ENCODE measurements at regions of chr11 and their contacts with region 1.

Region 1: DNA sequence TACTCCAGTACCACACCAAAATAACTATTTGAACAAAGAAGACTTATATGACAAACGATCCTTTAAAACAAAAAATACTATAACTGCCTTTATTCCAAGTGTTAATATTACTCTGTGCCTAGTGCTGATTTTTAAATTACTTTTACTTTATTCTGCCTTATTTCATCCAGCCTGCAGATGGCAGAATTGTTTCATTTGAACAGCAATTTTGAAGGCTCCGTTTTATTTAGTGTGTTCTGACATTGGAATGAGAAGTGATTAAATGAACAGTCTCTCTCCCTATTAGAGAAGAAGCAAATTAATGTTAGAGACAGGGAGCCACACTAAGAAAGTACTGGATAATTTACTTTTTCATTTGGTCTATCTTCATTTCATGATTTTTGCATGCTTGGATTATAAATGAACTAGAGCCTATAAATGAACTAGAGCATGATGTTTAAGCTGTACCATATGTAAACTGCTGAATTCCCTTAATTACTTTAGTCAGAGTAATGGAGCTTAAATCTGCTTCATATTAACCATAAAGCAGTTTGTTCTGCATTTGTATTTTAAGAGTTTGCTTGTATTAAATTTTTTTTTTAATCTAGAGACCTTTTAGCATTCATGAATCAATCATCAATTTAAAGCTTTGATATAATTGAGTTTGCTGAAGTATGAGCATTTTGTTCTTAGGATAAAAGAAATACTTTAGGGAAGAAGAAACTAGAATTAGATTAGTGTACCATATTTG is 9.8 kb downstream of the PDHX start:
- DNase-seq: no peak
- H3K4me3 ChIP-seq: no peak overlapping the region
- H3K27ac ChIP-seq: peak overlapping the region in 1 of 2 donors; percentile 57
- H3K4me1 ChIP-seq: no peaks in the 10 kb centered on the region
- H3K27me3 ChIP-seq: no peaks in the 10 kb centered on the region
- CTCF ChIP-seq: peak; percentile 73 to 85 (median 78)
- POLR2A ChIP-seq: no peak

Region 2: GRCh38 chr11:35106595-35106994 is 180.3 kb after region 1 on chr11:
- intact Hi-C with region 1: no loop called
- DNase-seq: no peak
- H3K4me3 ChIP-seq: no peak overlapping the region
- H3K27ac ChIP-seq: no peak overlapping the region
- H3K4me1 ChIP-seq: no peaks in the 10 kb centered on the region
- H3K27me3 ChIP-seq: no peaks in the 10 kb centered on the region
- CTCF ChIP-seq: no peak
- POLR2A ChIP-seq: no peak

Region 3: GRCh38 chr11:35391922-35392813 is 465.9 kb after region 1 on chr11:
- intact Hi-C with region 1: loop called (anchors 5 kb)
- DNase-seq: peak; percentile 84 to 87
- H3K4me3 ChIP-seq: no peak overlapping the region
- H3K27ac ChIP-seq: peak overlapping the region in 1 of 2 donors; percentile 62
- H3K4me1 ChIP-seq: no peaks in the 10 kb centered on the region
- H3K27me3 ChIP-seq: no peaks in the 10 kb centered on the region
- CTCF ChIP-seq: peak; percentile 84 to 94 (median 88)
- POLR2A ChIP-seq: no peak